Activated T-helper 1 cell treated with anti-CD3 and anti-CD28 coated beads, Interleukin-12 subunit alpha, Interleukin-12 subunit beta, Interleukin-2, Interleukin-4 antibody, amounts not matched to agents 30 ng/mL and 10 ng/mL and 1 ng/mL, durations not matched to agents 14 hours and 24 hours and 36 hours (primary cell): ENCODE measurements at regions of chr12 and their contacts with region 1.

Region 1: DNA sequence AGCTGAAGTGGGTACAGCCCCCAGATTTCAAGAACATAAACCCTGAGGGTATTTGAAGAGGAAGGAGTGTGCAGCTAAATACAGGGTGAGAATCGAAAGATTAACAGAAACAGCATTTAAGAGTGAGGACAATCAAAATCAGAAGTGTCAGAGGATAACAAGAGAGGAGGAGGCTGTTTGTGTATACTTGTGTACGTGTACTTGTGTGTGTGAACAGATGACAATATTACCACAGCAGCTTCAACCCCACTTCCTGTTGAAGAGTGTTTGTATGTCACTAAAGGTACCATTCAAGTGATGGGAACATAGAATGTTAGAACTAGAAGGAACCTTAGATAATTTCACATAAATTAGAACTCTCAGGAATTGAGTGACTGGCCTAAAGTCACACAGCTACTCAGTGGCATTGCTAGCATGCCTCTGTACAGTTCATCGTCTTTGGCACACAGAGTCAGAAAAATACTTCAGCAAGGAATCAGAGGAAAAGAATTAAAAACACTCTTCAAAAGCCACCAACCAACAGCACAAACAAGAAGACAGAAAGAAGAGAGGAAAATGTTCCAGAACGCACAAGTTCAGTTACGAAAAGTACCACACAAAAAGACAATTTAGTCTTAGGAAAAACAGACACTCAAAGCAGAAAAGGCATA is 164.3 kb upstream of the BCL2L14 start:
- DNase-seq: no peak
- H3K4me3 Mint-ChIP-seq: peak overlapping the region; percentile 30
- H3K27ac Mint-ChIP-seq: peak overlapping the region; percentile 88
- H3K4me1 Mint-ChIP-seq: peaks cover 53% of the 10 kb centered on the region
- H3K27me3 Mint-ChIP-seq: no peaks in the 10 kb centered on the region

Region 2: GRCh38 chr12:11581179-11581755 is 325.1 kb before region 1 on chr12:
- intact Hi-C with region 1: loop called (anchors 1 kb)
- DNase-seq: peak; percentile 20
- H3K4me3 Mint-ChIP-seq: peak overlapping the region; percentile 59
- H3K27ac Mint-ChIP-seq: peak overlapping the region; percentile 80
- H3K4me1 Mint-ChIP-seq: peaks cover 24% of the 10 kb centered on the region
- H3K27me3 Mint-ChIP-seq: peaks cover 7% of the 10 kb centered on the region

Region 3: GRCh38 chr12:11765817-11766794 is 140.3 kb before region 1 on chr12:
- intact Hi-C with region 1: loop called (anchors 1 kb)
- DNase-seq: peak; percentile 19
- H3K4me3 Mint-ChIP-seq: peak overlapping the region; percentile 47
- H3K27ac Mint-ChIP-seq: peak overlapping the region; percentile 93
- H3K4me1 Mint-ChIP-seq: peaks cover 100% of the 10 kb centered on the region
- H3K27me3 Mint-ChIP-seq: no peaks in the 10 kb centered on the region

Region 4: DNA sequence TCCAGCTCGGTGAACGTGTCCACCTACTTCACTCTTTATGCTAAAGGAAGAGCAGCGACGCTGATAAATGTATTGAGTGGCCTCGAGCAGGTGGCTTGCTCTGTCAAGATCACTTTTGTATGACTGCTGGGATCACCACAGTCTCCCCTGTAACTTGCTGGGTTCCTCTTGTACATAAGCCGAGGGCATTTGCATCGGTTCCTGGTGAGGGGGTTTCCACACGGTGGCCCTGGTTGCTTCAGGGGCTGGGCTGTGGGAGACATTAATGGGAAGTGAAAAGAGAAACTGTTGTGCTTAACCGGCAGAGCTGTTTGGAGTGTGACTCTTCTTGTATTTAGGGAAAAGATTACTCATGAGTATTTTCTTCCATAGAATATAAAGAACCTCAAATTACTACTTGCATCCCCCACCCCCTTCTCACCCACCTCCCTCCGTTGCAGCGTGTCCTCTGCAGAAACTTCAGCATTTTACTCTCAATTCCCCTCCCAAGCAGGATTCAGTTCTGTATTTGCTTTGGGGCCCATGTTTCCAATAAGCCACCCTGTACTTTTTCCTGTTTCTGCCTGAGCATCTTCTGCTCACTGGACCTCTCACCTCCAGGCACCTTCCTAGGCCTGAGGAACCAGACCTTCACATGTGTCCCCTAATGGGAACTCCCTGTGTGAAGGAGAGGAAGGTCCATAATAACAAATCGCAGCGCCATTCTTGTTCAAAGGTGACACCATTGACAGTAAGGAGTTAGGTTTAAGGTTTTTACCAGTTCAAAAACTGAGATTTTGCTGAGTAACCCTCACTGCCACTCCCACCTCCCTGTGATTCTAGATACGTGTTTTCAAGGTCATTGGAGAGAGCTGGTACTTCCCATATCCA is 69.9 kb before region 1 on chr12:
- intact Hi-C with region 1: loop called (anchors 1 kb)
- DNase-seq: peak; percentile 53
- H3K4me3 Mint-ChIP-seq: peak overlapping the region; percentile 67
- H3K27ac Mint-ChIP-seq: peak overlapping the region; percentile 94
- H3K4me1 Mint-ChIP-seq: peaks cover 91% of the 10 kb centered on the region
- H3K27me3 Mint-ChIP-seq: no peaks in the 10 kb centered on the region

Region 5: GRCh38 chr12:11958221-11959091 is 52.0 kb after region 1 on chr12:
- intact Hi-C with region 1: loop called (anchors 1 kb)
- DNase-seq: peak; percentile 55
- H3K4me3 Mint-ChIP-seq: peak overlapping the region; percentile 29
- H3K27ac Mint-ChIP-seq: peak overlapping the region; percentile 89
- H3K4me1 Mint-ChIP-seq: peaks cover 76% of the 10 kb centered on the region
- H3K27me3 Mint-ChIP-seq: no peaks in the 10 kb centered on the region

Region 6: GRCh38 chr12:12159988-12160387 is 253.6 kb after region 1 on chr12:
- intact Hi-C with region 1: no loop called
- DNase-seq: no peak
- H3K4me3 Mint-ChIP-seq: no peak overlapping the region
- H3K27ac Mint-ChIP-seq: no peak overlapping the region
- H3K4me1 Mint-ChIP-seq: no peaks in the 10 kb centered on the region
- H3K27me3 Mint-ChIP-seq: peaks cover 27% of the 10 kb centered on the region

Region 7: DNA sequence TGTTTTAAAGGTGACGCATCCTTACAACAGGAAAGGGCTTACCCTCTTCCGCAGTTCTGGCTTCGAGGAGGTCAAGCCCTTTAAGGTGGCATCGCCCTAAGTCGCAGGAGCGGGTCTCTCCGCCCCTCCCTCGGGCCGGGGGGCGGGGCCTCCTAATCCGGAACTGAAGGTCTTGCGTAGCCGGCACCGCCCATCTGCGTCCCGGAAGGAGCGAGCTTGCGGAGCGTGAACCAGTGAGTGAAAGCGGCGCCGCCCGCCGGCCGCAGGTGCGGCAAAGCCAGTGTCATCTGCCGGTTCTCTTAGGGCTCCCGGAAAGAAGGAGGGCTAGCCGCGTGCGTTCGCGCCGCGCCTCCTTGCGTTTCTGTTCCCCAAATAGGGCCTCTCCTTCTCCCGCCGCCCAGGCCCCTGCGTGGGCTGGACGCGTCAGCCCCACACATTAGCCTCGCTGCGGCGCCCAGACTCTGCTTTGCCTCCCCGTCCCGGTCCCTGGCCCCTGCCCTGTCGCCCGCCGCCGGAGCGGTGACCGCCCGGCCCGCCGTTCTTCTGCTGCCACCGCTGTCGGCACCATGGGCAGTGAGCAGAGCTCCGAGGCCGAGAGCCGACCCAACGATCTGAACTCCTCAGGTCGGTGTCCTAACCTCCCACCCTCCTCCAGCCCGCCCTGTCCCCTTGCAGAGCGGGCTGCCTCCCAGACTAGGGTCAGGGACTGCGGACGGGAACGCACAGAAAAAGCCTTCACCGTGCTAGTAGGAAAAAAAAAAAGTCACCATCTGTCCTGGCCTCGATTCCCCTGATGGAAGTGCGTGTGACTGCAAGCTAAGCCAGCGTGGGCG is 450.7 kb after region 1 on chr12 and contains the start of gene BORCS5:
- intact Hi-C with region 1: loop called (anchors 1 kb)
- DNase-seq: peak; percentile 98
- H3K4me3 Mint-ChIP-seq: peak within 1 kb of the TSS; percentile 97
- H3K27ac Mint-ChIP-seq: peak within 1 kb of the TSS; percentile 96
- H3K4me1 Mint-ChIP-seq: peaks cover 48% of the 10 kb centered on the region
- H3K27me3 Mint-ChIP-seq: no peaks in the 10 kb centered on the region
- total RNA-seq, gene BORCS5: 34.5 and 39.6 TPM in 2 replicates